ENCODE measurements at regions of chr3 and their contacts with region 1.

Region 1: GRCh38 chr3:13479581-13480339 is at the start of gene HDAC11:
- DNase-seq: peak; percentile 98 to 99
- H3K4me3 ChIP-seq: peak within 1 kb of the TSS; percentile 71
- H3K4me3 Mint-ChIP-seq: peak within 1 kb of the TSS; percentile 75
- H3K27ac Mint-ChIP-seq: no peak within 1 kb of the TSS
- H3K4me1 ChIP-seq: peaks cover 9% of the 10 kb centered on the region
- H3K4me1 Mint-ChIP-seq: no peaks in the 10 kb centered on the region
- H3K27me3 ChIP-seq: no peaks in the 10 kb centered on the region
- H3K27me3 Mint-ChIP-seq: no peaks in the 10 kb centered on the region
- CTCF ChIP-seq: no peak
- total RNA-seq, gene HDAC11: 10.5 and 10.9 TPM in 2 replicates

Region 2: GRCh38 chr3:13495921-13496723 is 16.4 kb after region 1 on chr3:
- CTCF ChIA-PET with region 1: interaction called, 17 read pairs
- POLR2A ChIA-PET with region 1: no interaction called
- intact Hi-C with region 1: no loop called
- DNase-seq: peak; percentile 65 to 83
- H3K4me3 ChIP-seq: no peak overlapping the region
- H3K4me3 Mint-ChIP-seq: no peak overlapping the region
- H3K27ac Mint-ChIP-seq: no peak overlapping the region
- H3K4me1 ChIP-seq: no peaks in the 10 kb centered on the region
- H3K4me1 Mint-ChIP-seq: no peaks in the 10 kb centered on the region
- H3K27me3 ChIP-seq: no peaks in the 10 kb centered on the region
- H3K27me3 Mint-ChIP-seq: no peaks in the 10 kb centered on the region
- CTCF ChIP-seq: peak; percentile 93 to 96